ENCODE measurements at regions of chr19 and their contacts with region 1.

Region 1: DNA sequence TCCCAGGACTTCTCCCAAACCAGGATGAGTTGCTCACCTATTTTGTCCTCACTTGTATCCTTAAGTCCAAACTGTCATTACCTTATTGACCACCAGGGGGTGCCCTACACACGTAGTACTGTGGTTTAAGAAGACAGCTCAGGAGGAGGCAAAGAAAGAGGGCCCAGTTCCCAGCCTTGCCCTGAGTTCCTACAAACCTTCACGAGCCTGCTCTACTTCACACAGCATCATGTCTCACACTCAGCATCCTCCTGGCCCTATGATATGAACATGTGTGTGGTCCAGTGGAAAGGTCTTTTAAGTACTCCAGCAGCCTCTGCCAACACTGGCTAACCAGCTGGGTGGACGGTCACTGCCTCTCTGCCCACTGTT is 8.1 kb upstream of the ZNF784 start:
- DNase-seq: peak; percentile 84
- H3K4me3 ChIP-seq: no peak overlapping the region
- CTCF ChIP-seq: peak; percentile 76

Region 2: GRCh38 chr19:55467236-55468053 is 165.0 kb before region 1 on chr19:
- CTCF ChIA-PET with region 1: interaction called, 26 read pairs
- POLR2A ChIA-PET with region 1: no interaction called
- DNase-seq: no peak
- H3K4me3 ChIP-seq: no peak overlapping the region
- CTCF ChIP-seq: peak; percentile 96

Region 3: GRCh38 chr19:55526216-55527196 is 105.9 kb before region 1 on chr19:
- CTCF ChIA-PET with region 1: interaction called, 11 read pairs
- POLR2A ChIA-PET with region 1: no interaction called
- DNase-seq: no peak
- H3K4me3 ChIP-seq: no peak overlapping the region
- CTCF ChIP-seq: no peak

Region 4: DNA sequence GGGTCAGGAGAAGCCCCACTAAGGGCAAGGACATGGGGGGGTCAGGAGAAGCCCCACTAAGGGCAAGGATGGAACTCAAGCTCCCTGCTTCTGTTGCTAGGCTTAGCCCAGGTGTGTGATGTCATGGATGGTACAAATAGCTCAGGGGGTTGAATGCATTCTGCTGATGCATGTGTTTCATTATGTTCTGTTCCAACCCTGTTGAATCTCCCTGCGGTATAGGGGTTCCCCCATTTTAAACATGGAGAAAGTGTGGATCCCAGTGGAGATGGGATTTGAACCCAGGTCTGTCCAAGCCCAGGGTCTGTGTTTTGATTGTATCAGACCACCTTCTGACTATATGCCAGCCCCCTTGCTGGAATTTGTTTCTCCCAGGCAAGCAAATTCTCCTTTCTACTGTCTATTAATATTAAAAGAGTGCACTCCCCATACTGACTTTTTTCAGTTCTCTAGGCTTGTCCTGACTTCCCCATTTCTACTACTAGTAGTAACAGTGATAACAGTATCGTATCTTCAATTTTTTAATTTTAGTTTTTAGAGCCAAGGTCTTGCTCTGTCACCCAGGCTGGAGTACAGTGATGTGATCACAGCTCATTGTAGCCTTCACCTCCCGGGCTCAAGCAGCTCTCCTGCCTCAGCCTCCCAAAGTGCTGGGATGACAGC is 20.3 kb before region 1 on chr19:
- CTCF ChIA-PET with region 1: interaction called, 53 read pairs
- POLR2A ChIA-PET with region 1: no interaction called
- DNase-seq: no peak
- H3K4me3 ChIP-seq: no peak overlapping the region
- CTCF ChIP-seq: no peak

Region 5: DNA sequence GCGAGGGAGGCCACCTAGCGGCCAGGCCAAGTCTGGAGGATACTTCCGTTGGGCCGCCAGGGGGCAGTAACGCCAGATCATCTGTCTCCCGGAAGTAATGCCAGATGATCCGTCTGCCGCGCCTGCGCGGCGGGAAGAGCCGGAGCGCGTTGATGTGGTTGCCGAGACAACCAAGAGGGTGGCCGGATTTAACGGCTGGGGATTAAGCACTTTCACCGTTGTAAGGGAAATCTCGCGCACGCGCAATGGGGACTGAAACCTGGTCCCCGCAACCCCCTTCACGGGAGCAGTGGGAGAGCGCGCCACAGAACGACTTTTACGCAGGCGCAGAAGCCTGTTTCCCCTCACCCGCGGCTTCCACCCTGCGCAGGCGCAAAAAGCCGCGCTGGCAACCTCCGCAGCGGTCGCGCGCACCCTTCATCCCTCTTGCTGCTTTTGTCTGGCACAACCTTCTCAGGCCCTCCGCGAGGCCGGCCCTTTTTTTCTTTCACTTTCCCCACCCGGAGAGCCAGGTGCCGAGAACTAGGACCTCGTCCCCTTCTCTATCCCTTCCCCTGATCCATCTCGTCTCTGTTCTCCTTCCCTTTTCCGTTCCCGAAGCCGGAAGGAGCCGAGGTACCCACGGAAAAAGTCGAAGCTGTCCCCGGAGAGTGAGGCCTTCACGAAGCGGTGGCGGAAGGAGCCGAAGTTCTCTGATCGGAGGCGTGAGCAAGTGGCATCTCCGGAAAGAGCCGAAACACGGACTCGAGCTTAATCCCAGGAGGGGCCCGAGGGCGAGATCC is 21.5 kb after region 1 on chr19:
- CTCF ChIA-PET with region 1: interaction called, 51 read pairs
- POLR2A ChIA-PET with region 1: no interaction called
- DNase-seq: peak; percentile 96
- H3K4me3 ChIP-seq: peak overlapping the region; percentile 68
- CTCF ChIP-seq: peak; percentile 100

Region 6: DNA sequence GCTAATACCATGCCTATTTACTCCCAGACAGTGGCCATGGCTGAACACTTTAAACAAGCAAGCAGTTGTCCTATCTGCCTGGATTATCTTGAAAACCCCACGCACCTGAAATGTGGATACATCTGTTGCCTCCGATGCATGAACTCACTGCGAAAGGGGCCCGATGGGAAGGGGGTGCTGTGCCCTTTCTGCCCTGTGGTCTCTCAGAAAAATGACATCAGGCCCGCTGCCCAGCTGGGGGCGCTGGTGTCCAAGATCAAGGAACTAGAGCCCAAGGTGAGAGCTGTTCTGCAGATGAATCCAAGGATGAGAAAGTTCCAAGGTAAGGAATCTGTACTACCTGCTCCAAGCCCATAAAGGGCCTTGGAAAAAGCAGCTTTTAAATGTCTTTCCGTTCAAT is 145.1 kb after region 1 on chr19:
- CTCF ChIA-PET with region 1: no interaction called
- POLR2A ChIA-PET with region 1: no interaction called
- DNase-seq: no peak
- H3K4me3 ChIP-seq: no peak overlapping the region
- CTCF ChIP-seq: no peak